MCF 10A (cell line): ENCODE measurements at regions of chr1 and their contacts with region 1.

Region 1: DNA sequence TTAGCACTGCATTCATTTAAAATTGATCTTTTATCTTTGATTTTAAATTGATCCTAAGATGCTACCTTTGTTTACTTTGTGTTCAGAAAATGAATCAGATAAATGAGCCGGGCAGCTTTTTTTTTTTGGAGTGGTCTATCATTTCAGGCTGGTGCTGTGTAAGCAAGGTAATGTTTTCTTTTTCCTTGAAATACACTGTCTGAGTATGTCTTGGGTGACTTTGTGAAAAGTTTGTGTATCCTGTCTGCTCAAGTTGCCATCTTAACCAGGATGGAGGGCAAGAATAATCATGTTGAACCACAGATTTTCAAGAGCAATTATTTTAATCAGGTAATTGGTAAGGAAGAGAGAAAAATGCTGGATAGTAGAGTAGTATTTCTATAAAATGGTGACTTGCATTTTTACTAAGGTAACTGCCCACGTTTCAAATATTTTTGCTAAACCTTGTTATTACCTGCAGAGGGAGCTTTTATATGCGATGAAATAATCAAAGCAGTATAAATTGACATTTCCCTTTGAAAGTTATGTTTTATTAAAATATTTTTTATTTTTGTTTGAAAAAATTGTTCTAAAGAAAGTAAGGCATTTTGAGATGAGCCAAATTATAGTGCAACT is 11.1 kb downstream of the ADGRL2 start:
- DNase-seq: no peak
- H3K4me3 Mint-ChIP-seq: no peak overlapping the region
- H3K27ac Mint-ChIP-seq: no peak overlapping the region
- H3K4me1 Mint-ChIP-seq: peaks cover 5% of the 10 kb centered on the region
- H3K27me3 Mint-ChIP-seq: peaks cover 11% of the 10 kb centered on the region
- CTCF ChIP-seq: peak; percentile 37

Region 2: DNA sequence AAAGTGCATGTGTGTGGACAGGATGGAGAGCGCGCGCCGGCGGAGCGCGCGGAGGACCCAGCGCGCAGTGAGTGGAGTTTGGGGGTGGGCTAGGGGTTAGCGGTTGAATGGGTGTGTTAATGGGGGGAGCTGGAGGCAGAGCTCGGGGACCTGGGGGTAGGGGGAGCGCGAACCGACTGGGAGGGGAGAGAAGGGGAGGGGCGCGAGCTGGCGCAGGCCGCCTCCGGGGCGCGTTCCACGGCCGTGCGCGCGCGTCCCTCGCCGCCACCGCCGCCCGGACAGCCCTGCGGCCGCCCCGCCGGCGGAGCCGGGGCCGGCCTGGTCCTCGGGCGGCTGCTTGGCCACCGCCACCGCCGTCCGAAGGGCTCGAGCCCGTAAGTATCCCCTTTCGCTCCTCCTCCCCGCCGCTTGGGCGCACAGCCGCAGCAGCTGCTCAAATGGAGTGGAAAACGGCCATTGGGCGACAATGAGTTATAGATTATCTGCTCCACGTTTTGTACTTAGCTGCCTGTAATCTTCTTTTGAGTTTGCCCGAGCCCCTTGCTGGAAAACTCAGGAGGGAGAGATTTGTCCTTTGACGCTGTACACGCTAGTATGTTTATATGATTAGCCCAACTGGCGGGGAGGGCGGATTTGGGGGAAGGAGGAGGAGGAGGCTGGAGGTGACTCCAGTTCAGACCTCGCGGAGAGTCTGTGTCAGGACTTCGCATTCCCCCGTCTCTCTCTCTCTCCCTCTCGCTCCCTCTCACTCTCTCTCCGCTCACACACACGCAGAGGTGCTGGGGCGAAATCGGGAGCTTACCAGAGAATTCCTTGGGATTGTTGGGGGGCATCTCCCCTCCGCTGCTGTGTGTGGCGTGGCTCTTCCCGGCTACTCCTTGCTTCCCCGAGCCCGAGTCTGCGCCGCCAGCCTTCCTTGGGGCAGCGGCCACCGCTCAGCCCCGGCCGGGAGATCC is 10.9 kb before region 1 on chr1 and contains the start of gene ADGRL2:
- CTCF ChIA-PET with region 1: interaction called, 12 read pairs
- POLR2A ChIA-PET with region 1: interaction called, 56 read pairs
- intact Hi-C with region 1: no loop called
- DNase-seq: peak; percentile 93
- H3K4me3 Mint-ChIP-seq: peak within 1 kb of the TSS; percentile 98
- H3K27ac Mint-ChIP-seq: peak within 1 kb of the TSS; percentile 69
- H3K4me1 Mint-ChIP-seq: peaks cover 7% of the 10 kb centered on the region
- H3K27me3 Mint-ChIP-seq: peaks cover 33% of the 10 kb centered on the region
- CTCF ChIP-seq: no peak
- total RNA-seq, gene ADGRL2: 3.0 and 3.4 TPM in 2 replicates

Region 3: DNA sequence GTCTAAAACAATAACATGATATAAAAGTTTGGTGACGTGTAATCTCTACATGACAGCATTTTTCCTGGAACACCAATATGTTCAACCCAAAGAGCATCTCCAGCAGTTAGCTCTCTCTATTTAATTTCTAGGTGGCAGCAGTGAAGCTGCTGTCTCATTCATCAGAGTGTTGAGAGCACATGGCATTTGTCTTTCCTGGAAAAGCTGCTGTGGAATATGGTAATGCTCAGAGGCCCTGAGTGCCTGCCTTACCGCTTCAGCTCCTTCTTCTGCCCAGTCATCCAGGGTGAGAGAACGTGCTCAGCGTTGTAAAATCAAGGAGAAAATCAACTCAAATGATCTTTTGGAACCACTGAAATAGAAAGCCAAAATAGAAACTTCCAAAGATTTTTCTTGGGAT is 629.5 kb after region 1 on chr1:
- CTCF ChIA-PET with region 1: no interaction called
- POLR2A ChIA-PET with region 1: no interaction called
- intact Hi-C with region 1: loop called (anchors 10 kb)
- DNase-seq: no peak
- H3K4me3 Mint-ChIP-seq: no peak overlapping the region
- H3K27ac Mint-ChIP-seq: no peak overlapping the region
- H3K4me1 Mint-ChIP-seq: no peaks in the 10 kb centered on the region
- H3K27me3 Mint-ChIP-seq: no peaks in the 10 kb centered on the region
- CTCF ChIP-seq: no peak